Posterior vena cava (tissue), 2 donors: ENCODE measurements at regions of chr11 and their contacts with region 1.

Region 1: DNA sequence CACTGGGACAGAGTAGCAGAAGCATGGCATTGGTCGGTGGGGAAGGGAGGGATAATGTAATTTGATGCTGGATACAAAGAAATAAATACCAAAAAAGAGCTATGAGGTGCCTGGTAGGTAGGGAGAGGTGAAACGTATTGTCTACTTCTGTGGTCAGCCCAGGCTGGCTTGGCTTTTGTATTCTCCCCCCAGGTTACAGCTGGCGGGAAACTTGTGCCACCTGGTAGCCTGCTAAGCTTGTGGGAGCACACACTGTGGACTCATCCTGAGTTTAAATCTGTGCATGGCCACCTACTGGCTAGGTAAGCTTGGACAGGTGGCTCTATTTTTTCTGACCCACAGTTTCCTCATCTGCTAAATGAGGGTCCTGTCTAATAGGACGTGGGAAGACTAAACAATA is 165.2 kb upstream of the E2F8 start:
- DNase-seq: no peak

Region 2: DNA sequence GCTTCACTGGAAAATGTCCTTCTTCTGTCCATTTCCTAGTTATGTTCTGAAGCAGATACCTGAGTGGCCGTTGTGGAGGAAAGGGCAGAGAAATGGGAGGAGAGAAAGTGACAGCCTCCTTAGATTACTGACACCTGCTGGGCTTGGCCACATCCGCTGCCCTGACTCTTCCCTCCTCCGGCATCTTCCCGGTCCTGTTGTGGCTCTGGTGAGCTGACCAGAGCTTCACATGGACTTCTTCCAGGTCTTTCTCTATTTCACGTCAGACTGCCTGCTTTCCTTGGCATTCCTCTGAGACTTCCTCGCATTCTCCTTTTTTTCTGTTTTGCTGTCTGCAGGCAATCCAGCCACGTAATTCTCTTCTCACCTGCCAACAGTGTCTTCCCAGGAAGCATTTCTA is 26.5 kb before region 1 on chr11:
- intact Hi-C with region 1: loop called in 1 of 2 experiments (anchors 2 kb)
- DNase-seq: no peak